CD4-positive, alpha-beta T cell (primary cell): ENCODE measurements at regions of chr14 and their contacts with region 1.

Region 1: DNA sequence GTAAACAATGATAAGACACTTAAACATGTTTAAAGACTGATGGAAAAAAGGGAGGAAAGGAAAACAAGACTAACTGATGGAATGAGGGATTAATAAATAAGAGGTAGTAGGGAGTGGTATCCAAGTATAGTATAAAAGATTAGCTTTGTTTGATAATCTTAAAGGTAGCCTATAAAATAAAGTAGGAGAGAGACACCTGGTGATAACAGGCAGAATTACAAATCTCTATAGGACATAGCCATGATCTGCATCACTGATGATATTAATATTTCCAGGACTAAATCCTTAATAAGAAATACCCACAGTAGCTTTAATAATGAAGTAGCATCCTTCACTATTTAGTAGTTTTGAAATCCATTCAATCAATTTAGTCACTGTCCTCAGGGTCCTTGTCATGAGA is 30.4 kb downstream of the DLGAP5 start:
- DNase-seq: peak in 3 of 14 experiments; percentile 62 to 68 (median 66)
- ATAC-seq: peak; percentile 75
- H3K4me3 ChIP-seq: no peak overlapping the region
- H3K4me3 Mint-ChIP-seq: no peak overlapping the region
- H3K27ac ChIP-seq: no peak overlapping the region
- H3K27ac Mint-ChIP-seq: no peak overlapping the region
- H3K4me1 ChIP-seq: no peaks in the 10 kb centered on the region
- H3K4me1 Mint-ChIP-seq: peaks cover 13% of the 10 kb centered on the region
- H3K27me3 ChIP-seq: no peaks in the 10 kb centered on the region
- H3K27me3 Mint-ChIP-seq: no peaks in the 10 kb centered on the region
- CTCF ChIP-seq: peak; percentile 64

Region 2: DNA sequence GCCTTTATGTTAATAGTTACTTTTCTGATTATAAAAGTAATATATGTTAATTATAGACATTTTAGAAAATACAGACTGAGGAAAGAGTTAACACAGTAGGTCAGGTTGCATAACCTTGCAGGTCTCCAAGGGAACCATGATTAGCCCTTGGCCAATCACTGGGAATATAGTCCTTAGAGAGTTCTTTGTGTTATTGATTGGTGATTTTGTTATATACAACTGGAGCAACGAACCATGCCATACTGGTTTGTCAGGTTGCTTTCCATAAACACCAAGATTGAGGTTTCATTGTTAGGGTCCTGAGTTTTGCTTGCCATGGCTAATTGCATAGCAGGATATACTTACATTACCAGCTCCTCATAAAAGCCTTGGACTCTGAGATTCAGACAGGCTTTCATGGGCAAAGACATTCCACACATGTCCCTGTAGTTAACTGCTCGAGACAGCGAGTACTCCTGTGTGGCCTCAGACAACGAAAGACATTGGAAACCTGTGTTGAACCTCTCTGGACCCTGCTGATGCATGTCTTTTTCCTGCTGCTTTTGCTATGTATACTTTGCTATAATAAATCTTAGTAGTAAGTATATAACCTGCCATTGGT is 75.8 kb before region 1 on chr14:
- CTCF ChIA-PET with region 1: interaction called, 27 read pairs
- POLR2A ChIA-PET with region 1: no interaction called
- intact Hi-C with region 1: loop called (anchors 1 kb)
- DNase-seq: no peak
- ATAC-seq: no peak
- H3K4me3 ChIP-seq: no peak overlapping the region
- H3K4me3 Mint-ChIP-seq: no peak overlapping the region
- H3K27ac ChIP-seq: no peak overlapping the region
- H3K27ac Mint-ChIP-seq: no peak overlapping the region
- H3K4me1 ChIP-seq: peaks cover 4% of the 10 kb centered on the region
- H3K4me1 Mint-ChIP-seq: peaks cover 4% of the 10 kb centered on the region
- H3K27me3 ChIP-seq: no peaks in the 10 kb centered on the region
- H3K27me3 Mint-ChIP-seq: no peaks in the 10 kb centered on the region
- CTCF ChIP-seq: no peak

Region 3: GRCh38 chr14:55094321-55095157 is 66.5 kb before region 1 on chr14:
- CTCF ChIA-PET with region 1: interaction called, 27 read pairs
- POLR2A ChIA-PET with region 1: interaction called, 5 read pairs
- intact Hi-C with region 1: loop called (anchors 1 kb)
- DNase-seq: no peak
- ATAC-seq: no peak
- H3K4me3 ChIP-seq: no peak overlapping the region
- H3K4me3 Mint-ChIP-seq: no peak overlapping the region
- H3K27ac ChIP-seq: no peak overlapping the region
- H3K27ac Mint-ChIP-seq: no peak overlapping the region
- H3K4me1 ChIP-seq: peaks cover 29% of the 10 kb centered on the region
- H3K4me1 Mint-ChIP-seq: peaks cover 19% of the 10 kb centered on the region
- H3K27me3 ChIP-seq: no peaks in the 10 kb centered on the region
- H3K27me3 Mint-ChIP-seq: no peaks in the 10 kb centered on the region
- CTCF ChIP-seq: no peak

Region 4: GRCh38 chr14:55438066-55438683 is 277.2 kb after region 1 on chr14:
- CTCF ChIA-PET with region 1: no interaction called
- POLR2A ChIA-PET with region 1: no interaction called
- intact Hi-C with region 1: no loop called
- DNase-seq: peak in 3 of 14 experiments; percentile 23 to 37 (median 34)
- ATAC-seq: no peak
- H3K4me3 ChIP-seq: no peak overlapping the region
- H3K4me3 Mint-ChIP-seq: no peak overlapping the region
- H3K27ac ChIP-seq: no peak overlapping the region
- H3K27ac Mint-ChIP-seq: no peak overlapping the region
- H3K4me1 ChIP-seq: peaks cover 20% of the 10 kb centered on the region
- H3K4me1 Mint-ChIP-seq: peaks cover 25% of the 10 kb centered on the region
- H3K27me3 ChIP-seq: peaks cover 0 to 2% of the 10 kb centered on the region in 2 experiments
- H3K27me3 Mint-ChIP-seq: no peaks in the 10 kb centered on the region
- CTCF ChIP-seq: no peak